ENCODE measurements at regions of chr5 and their contacts with region 1.

Region 1: DNA sequence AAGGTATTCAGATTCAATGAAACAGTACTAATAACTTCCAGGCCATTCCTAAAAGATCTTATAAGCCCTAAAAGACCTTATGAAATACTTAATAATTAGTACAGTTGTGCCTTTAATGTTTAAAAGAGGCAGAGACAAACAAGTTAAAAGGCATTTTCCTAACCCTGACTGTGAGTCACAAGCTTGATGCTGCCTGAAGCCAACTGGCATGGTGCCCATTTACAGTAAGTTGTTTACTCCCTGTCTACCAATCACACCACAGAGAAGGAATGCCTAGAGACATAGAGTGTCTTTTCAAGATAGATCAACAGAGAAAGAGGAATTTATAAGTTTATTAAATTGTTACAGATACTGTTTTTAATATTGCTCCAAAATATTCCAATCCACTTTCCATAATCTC is 47.8 kb downstream of the NR3C1 start:
- DNase-seq: peak in 1 of 2 donors; percentile 90
- ATAC-seq: peak in 2 of 3 donors; percentile 49 to 61
- H3K4me3 ChIP-seq: no peak overlapping the region
- H3K4me3 Mint-ChIP-seq: no peak overlapping the region
- H3K27ac ChIP-seq: no peak overlapping the region
- H3K27ac Mint-ChIP-seq: peak overlapping the region in 1 of 2 donors; percentile 96
- H3K4me1 ChIP-seq: peaks cover 16% of the 10 kb centered on the region
- H3K4me1 Mint-ChIP-seq: peaks cover 33 to 65% of the 10 kb centered on the region in 2 donors
- H3K27me3 ChIP-seq: no peaks in the 10 kb centered on the region
- H3K27me3 Mint-ChIP-seq: no peaks in the 10 kb centered on the region
- CTCF ChIP-seq: no peak

Region 2: DNA sequence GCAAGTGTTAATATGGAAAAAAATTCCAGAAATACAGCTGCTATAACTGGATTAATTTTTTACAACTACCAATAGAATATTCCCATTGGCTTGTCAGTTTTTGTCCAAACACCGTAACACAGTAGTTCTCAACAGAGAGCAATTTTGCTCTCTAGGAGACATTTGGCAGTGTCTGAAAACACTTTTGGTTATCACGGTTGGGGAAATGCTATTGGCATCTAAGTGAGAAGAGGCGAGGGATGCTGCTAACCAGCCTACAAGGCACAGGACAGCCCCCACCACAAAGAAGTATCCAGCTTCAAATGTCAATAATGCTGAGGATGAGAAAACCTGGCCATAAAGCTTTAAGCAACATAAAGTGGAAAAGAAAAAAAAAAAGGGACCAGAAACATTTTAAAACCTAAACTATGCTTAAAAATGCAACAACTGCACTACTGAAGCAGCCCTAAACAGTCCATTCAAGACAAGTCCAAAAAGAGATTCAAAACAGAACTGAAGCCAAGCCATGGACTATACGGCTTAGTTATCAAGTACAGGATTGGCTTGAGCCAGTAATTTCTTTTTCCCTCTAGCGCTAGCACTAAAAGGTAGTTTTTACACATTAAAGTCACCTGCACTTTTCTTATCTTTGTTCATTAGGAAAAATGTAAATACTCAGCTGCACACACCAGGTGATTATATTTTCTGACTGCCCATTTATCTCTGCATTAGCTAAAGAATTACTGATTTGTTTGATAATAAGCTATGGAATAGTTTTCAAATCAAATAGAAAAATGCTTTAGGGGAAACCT is 36.1 kb before region 1 on chr5:
- intact Hi-C with region 1: loop called (anchors 5 kb)
- DNase-seq: no peak
- ATAC-seq: peak in 1 of 3 donors; percentile 51
- H3K4me3 ChIP-seq: no peak overlapping the region
- H3K4me3 Mint-ChIP-seq: no peak overlapping the region
- H3K27ac ChIP-seq: no peak overlapping the region
- H3K27ac Mint-ChIP-seq: peak overlapping the region; percentile 64 to 65
- H3K4me1 ChIP-seq: peaks cover 15% of the 10 kb centered on the region
- H3K4me1 Mint-ChIP-seq: peaks cover 64 to 75% of the 10 kb centered on the region in 2 donors
- H3K27me3 ChIP-seq: no peaks in the 10 kb centered on the region
- H3K27me3 Mint-ChIP-seq: no peaks in the 10 kb centered on the region
- CTCF ChIP-seq: no peak

Region 3: DNA sequence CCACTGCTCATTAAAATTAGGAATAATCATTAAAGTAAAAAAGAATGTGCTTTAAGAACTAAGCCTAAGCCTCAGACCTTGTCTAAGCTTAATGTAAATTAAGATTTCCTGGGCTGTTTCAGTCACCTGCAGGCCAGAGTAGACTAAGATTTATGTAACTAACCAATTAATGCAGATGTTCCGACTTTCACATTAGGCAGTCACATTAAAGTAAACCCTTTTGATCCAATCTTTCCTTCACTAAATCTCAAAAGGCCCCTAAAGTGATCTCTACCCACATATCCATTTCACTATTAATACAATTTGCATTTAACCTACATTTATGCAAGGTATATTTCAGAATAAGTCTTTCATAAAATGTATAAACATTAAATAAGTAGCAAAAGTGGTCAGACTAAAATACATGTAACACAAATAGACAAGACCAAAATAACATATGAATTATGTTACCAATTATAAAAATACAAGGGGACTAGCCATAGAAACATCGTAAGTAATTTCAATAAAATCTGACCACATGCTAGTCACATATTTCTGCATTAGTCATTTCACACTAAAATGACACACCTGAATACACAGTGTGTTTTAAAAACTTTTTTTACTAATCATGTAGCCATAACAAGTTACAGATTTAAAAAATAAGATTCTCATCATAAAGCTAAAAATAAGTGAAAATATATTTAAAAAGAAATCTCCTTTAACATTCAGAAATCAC is 40.1 kb after region 1 on chr5:
- intact Hi-C with region 1: loop called (anchors 5 kb)
- DNase-seq: no peak
- ATAC-seq: peak in 2 of 3 donors; percentile 31 to 69
- H3K4me3 ChIP-seq: no peak overlapping the region
- H3K4me3 Mint-ChIP-seq: peak overlapping the region; percentile 97
- H3K27ac ChIP-seq: no peak overlapping the region
- H3K27ac Mint-ChIP-seq: peak overlapping the region; percentile 74 to 78
- H3K4me1 ChIP-seq: peaks cover 18% of the 10 kb centered on the region
- H3K4me1 Mint-ChIP-seq: peaks cover 73 to 76% of the 10 kb centered on the region in 2 donors
- H3K27me3 ChIP-seq: no peaks in the 10 kb centered on the region
- H3K27me3 Mint-ChIP-seq: no peaks in the 10 kb centered on the region
- CTCF ChIP-seq: no peak

Measured in natural killer cell (primary cell).